ENCODE measurements at regions of chr5 and their contacts with region 1.

Region 1: DNA sequence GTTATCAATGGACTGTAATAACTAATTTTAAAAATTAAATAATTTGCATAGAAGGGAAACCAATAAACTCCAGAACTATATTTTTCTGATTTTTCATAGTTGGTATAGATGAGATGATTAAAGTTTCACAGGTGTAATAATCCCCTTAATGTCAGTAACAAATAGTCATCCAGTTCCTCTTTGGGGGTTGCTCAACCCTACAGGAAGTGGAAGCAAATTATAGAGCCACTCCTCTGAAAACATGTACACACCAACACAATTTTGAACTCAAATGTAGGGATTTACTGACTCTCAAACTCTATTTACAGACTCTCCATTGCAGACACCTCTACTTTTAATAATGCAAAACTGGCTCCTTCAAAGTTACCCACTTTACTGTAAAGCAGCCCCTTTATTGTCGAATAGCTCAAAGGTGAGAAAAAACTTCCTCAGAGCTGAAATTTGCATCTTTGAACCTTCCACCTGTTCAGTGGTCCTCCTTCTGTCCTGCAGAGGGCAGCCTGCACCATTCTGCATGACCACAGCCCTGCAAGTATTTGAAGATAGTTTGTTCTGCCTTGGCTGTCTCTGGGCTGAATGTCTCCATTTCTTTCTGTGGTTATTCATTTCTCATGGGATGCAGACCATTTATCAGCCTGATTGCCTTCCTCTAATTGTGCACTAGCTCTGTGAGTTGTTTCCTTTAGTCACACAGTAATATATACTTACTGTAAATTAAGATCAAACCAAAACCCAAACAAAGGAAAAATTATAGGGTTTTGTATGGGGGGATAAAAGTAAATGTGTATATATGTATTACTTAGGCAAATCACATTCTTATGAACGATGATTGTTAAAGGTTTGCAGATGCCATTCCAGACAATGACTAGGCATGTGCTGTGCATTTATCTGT is 383.2 kb upstream of the SGCD start:
- DNase-seq: peak in 1 of 2 donors; percentile 65
- ATAC-seq: peak; percentile 55 to 85 (median 83)
- H3K4me3 ChIP-seq: no peak overlapping the region
- H3K4me3 Mint-ChIP-seq: no peak overlapping the region
- H3K27ac ChIP-seq: no peak overlapping the region
- H3K27ac Mint-ChIP-seq: no peak overlapping the region
- H3K4me1 ChIP-seq: no peaks in the 10 kb centered on the region
- H3K4me1 Mint-ChIP-seq: peaks cover 7 to 8% of the 10 kb centered on the region in 2 donors
- H3K27me3 ChIP-seq: no peaks in the 10 kb centered on the region
- H3K27me3 Mint-ChIP-seq: peaks cover 9 to 26% of the 10 kb centered on the region in 2 donors
- CTCF ChIP-seq: peak; percentile 62

Region 2: DNA sequence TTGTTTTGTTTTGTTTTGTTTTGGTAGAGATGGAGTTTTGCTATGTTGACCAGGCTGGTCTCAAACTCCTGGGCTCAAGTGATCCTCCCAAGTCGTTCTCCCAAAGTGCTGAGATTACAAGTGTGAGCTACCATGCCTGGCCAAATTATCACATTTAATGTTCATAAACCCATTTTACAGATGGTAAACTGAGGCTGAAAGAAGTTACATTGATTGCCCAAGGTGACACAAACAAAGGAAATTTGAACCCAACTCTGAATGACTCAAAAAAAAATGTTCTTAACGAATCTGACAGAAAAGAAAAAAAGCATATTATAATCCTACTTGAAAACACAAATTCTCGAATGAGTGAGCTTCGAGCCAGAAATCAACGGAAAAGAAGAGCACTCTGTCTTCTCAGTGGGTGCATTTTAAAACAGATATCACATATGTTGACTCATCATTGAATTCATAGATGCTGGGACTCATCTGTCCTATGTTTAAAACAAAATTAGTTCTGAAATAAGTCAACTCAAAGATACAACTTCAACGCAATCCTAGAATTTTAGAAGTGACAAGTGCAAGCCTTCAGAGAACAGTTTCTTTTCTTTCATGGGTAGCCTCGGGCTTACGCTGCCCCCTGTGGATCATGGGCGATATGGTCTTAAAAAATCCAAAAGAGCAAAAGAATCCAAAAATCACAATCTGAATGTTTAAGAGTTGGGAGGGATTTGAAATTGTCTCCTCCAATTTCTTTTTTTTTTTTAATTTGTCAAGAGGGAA is 990.9 kb after region 1 on chr5:
- intact Hi-C with region 1: loop called (anchors 1 kb)
- DNase-seq: peak; percentile 51 to 80
- ATAC-seq: peak; percentile 68 to 71 (median 69)
- H3K4me3 ChIP-seq: no peak overlapping the region
- H3K4me3 Mint-ChIP-seq: no peak overlapping the region
- H3K27ac ChIP-seq: no peak overlapping the region
- H3K27ac Mint-ChIP-seq: peak overlapping the region; percentile 65 to 78
- H3K4me1 ChIP-seq: peaks cover 28% of the 10 kb centered on the region
- H3K4me1 Mint-ChIP-seq: peaks cover 48 to 59% of the 10 kb centered on the region in 2 donors
- H3K27me3 ChIP-seq: no peaks in the 10 kb centered on the region
- H3K27me3 Mint-ChIP-seq: peaks cover 0 to 2% of the 10 kb centered on the region in 2 donors
- CTCF ChIP-seq: peak; percentile 93

Measured in natural killer cell (primary cell).